ENCODE measurements at regions of chr7 and their contacts with region 1.

Region 1: GRCh38 chr7:18352339-18353255 is 143.0 kb upstream of the HDAC9 start:
- DNase-seq: peak; percentile 13
- CTCF ChIP-seq: peak; percentile 66

Region 2: GRCh38 chr7:18590744-18591340 is 238.2 kb after region 1 on chr7:
- in situ Hi-C with region 1: loop called (anchors 25 kb)
- DNase-seq: no peak
- CTCF ChIP-seq: peak; percentile 38

Region 3: DNA sequence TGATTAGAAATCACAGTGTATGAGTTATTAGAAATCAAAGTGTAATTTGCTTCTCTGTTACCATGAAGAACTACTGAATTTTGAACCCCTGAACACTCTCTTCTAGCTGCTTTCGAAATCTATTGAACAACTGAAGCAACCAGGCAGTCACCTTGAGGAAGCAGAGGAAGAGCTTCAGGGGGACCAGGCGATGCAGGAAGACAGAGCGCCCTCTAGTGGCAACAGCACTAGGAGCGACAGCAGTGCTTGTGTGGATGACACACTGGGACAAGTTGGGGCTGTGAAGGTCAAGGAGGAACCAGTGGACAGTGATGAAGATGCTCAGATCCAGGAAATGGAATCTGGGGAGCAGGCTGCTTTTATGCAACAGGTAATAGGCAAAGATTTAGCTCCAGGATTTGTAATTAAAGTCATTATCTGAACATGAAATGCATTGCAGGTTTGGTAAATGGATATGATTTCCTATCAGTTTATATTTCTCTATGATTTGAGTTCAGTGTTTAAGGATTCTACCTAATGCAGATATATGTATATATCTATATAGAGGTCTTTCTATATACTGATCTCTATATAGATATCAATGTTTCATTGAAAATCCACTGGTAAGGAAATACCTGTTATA is 313.6 kb after region 1 on chr7:
- in situ Hi-C with region 1: loop called (anchors 25 kb)
- DNase-seq: peak; percentile 22
- CTCF ChIP-seq: peak; percentile 97

Region 4: DNA sequence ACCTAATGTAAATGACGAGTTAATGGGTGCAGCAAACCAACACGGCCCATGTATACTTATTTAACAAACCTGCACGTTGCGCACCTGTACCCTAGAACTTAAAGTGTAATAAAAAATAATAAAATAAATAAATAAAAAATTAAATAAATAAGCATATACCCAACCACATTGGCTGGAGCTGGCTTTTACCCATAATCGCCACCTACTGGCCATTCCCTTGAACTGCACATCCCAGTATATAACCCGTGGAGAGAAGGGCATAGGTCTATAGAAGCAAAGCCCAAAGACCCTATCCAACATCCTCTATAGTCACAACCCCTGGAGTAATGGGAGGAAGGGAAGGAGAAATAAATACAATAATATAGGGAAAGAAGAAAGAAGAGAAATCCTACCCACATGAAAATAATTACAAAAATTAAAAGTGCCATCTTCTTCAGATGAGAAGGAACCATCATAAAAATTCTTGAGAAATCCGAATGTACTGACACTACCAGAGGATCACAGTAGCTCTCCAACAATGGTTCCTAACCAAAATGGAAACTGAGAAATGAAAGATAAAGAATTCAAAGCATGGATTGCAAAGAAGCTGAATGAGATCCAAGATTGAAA is 699.3 kb after region 1 on chr7:
- in situ Hi-C with region 1: loop called (anchors 25 kb)
- DNase-seq: peak; percentile 27
- CTCF ChIP-seq: peak; percentile 82